ENCODE measurements at regions of chr9 and their contacts with region 1.

Region 1: DNA sequence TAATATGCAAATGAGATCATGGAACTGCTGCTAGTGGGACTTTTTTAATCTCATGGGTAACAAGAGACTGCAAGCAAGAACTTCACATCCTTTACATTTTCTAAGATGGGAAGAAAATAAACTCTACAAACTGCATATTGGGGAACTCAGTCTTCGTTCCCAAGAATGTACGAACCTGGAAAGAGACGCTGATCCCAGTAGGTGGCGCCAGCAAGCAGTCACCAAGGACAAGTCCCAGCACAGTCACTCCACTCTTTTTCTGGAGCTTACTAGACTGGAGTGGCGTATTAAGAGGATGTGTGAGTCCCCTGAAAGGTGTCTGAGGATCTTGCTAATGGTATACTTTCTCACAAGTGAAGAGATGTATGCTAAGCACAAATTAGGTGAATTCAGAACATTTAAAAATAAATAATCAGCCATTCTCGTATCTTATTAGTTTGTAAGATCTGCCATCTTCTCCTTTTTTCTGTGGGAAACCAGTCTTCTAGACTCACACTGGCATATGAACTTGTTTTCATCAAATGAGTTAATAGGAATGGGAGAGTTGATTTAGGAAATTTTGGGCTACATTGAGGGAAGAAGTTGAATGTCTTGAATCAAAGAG is 16.0 kb upstream of the PUM3 start:
- DNase-seq: peak; percentile 88

Region 2: DNA sequence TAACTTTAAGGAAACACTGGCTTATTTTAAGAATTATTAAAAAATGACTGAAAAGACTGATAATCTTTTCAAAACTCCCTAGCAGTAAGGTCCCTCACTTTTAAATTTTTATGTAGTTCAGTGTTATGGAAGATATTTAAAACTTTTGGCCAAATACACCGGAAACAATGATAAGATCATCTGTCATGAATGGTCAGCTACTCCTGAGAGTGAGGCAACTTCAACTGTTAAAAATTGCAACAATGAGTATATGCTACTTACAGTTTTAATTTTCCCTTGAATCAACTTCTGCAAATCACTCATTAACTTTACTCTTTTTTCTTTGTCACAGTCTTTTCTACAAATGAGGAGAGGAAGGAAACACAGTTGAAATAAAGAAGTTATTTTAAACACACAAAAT is 26.8 kb before region 1 on chr9:
- intact Hi-C with region 1: no loop called
- DNase-seq: no peak

Region 3: DNA sequence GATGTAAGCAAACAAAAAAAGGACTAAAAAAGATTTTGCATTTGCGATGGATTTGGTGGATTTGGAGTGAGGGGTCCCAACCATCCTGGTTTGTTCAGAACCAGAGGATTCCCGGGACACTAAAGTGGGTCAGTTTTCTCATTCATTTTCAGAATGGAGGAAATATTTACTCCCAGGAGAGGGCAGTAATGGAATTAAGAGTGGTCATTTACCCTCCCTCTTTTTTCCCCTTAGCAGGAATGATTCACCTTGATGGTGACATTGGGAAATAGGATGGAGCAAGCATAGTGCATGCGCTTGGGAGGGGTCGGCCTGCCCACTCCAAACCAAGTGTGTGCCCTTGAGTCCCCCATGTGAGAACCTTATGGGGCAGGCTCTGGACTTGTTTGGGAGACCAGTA is 148.2 kb after region 1 on chr9:
- intact Hi-C with region 1: no loop called
- DNase-seq: no peak

Region 4: DNA sequence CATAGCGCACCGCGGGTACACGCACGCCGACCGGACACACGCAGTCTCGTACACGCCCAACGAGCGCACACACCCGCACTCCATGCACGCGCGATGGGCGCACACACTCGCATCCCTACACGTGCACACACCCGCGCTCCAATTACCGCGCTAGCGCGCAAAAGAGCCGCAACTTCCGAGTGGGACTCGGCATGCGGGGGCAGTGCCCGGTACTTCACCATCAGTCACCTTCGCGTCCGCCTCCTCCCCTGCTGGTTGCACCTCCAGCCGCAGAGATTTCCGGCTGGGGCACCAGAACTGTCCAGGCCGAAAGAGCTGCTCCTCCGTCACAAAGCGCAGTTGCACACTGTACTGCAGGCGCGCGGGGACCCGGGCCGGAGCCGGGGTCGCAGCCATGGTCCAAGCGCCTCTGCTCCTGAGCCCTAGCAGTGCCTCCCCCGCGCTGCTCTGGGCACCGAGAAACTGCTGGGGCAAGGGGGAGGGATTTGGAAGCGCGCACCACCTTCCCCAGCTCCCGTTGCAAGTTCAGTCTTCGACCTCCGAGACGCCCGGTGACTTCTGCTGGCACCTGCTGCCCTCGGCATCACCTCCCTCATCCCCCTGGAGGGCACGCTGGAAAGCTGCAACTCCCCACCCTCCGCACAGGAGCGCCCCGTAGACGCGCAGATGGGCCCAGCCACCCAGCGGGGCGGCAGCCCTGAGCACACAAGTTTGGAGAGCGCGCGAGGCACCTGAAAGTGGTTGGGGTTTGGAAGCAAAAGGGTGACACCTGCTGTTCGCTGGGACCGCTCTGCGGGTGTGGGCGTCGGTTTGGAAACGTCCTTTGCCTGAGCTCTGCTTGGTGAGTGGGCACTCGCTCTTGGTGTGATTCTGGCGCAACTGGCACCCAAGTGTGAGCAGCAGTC is 321.4 kb after region 1 on chr9:
- intact Hi-C with region 1: loop called in 1 of 2 experiments (anchors 5 kb)
- DNase-seq: no peak

Measured in posterior vena cava (tissue), 2 donors.